ENCODE measurements at regions of chr19 and their contacts with region 1.

Region 1: GRCh38 chr19:49676690-49677231 is 310 bp upstream of the PRMT1 start:
- DNase-seq: peak; percentile 99
- ATAC-seq: peak; percentile 92

Region 2: GRCh38 chr19:49570138-49570856 is 106.5 kb before region 1 on chr19:
- intact Hi-C with region 1: loop called (anchors 5 kb)
- DNase-seq: no peak
- ATAC-seq: peak; percentile 71

Region 3: DNA sequence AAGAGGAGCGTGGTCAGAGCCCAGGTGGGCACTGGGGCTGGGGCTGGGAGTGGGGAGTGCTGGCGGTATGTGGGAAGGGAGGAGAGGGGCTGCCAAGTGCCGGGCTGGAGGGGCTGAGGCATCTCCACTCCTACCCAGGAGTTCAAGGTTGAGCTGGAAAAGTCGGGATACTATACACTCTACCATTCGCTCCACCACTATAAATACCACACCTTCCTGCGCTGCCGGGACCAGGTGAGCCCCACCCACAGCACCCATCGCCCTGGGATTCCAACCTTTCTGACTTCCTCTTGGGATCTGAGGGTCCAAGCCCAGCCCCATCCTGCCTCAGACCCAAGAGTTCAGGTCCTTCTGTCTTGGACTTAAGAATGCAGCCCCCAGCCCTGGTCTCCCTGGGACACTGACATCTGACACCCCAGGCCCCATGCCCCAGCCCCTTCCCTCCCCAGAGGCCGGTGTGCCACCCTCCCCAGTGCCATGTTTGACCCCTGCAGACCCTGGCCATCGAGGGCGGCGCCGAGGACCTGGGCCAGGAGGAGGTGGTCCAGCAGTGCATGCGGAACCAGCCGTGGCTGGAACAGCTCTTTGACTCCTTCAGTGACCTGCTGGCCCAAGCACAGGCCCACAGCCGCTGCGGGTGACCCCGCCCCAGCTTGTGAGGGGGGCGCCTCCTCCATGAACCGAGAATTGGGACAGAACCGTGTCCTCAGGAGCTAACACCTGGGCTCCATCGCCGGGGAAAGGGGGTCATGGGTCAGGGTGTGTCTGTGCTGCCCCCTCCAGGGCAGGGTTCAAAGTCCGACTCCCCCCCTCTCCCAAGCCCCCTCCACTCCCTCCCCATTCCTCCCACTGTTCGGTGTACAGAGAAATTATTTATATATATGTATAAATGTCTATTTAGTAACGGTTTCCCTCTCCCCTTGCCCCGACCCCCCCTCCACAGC is 51.5 kb before region 1 on chr19:
- intact Hi-C with region 1: no loop called
- DNase-seq: no peak
- ATAC-seq: peak; percentile 17

Region 4: GRCh38 chr19:49640113-49640898 is 36.5 kb before region 1 on chr19 and contains the start of gene RRAS:
- intact Hi-C with region 1: loop called (anchors 2 kb)
- DNase-seq: peak; percentile 100
- ATAC-seq: peak; percentile 79
- total RNA-seq, gene RRAS: 120 TPM

Region 5: DNA sequence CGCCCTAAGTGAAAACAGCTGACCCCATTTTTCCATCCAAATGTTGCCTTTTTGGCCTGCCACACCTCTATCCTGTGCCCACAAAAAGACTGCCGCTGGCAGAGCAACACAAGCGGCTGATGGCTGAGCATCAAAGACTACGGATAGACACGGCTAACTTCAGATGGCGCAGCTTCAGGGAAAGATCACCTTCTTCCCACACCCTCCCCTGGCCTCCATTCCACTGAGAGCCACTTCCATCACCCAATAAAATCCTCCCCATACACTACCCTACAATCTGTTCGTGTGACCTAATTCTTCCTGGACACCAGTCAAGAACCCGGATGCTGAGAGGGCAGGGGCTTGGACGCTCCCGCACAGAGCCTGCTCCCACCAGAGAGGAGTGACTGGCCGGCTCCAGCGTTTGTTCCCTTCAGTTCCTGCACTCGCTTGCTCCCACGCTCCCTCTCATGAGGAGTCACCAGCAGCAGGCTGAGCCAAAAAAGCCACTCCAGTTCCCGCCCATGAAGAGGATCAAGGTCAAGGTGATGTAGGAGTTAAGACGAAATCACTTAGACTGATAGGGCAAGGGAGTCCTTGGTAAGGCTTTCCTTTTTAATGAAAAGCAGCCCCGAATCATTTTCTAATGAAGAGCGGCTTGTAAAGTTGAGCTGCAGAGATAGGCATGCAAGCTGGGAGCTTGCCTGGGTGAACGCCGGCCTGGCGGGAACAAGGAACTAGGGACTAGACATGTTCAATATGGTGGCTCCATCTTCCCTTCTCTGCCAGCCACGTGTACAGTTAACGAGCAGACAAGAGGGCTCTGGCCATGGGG is 50.7 kb after region 1 on chr19:
- intact Hi-C with region 1: no loop called
- DNase-seq: peak; percentile 80
- ATAC-seq: peak; percentile 84

Region 6: GRCh38 chr19:49817964-49818648 is 141.3 kb after region 1 on chr19 and contains the start of gene MED25:
- intact Hi-C with region 1: loop called (anchors 1 kb)
- DNase-seq: peak; percentile 95
- ATAC-seq: peak; percentile 73
- total RNA-seq, gene MED25: 70.4 TPM

Region 7: GRCh38 chr19:49832556-49832955 is 155.8 kb after region 1 on chr19:
- intact Hi-C with region 1: no loop called
- DNase-seq: no peak
- ATAC-seq: no peak

Region 8: DNA sequence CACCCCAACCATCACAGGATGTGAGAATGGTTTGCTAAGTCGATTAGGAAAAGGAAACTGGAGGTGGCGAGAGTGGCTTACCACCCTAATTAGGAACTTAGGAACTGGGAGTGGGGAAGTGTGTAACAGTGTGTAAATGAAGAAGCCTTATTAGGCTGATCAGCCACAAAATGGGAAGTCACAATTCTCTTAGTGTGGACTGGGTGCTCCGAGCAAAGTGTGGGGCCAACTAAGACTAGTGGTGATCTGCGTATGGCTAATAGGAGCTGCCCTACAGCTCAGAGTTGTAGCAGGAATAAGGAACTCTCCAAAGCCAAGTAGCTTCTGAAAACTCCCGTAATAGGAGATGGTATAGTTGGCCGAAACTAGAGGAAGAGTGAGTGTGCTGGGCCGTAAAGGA is 276.7 kb after region 1 on chr19:
- intact Hi-C with region 1: no loop called
- DNase-seq: no peak
- ATAC-seq: peak; percentile 55